Dendritic cell treated with granulocyte-macrophage colony-stimulating factor and Interleukin-4, amounts not matched to agents 40 ng/mL and 50 ng/mL, for 4 days (primary cell): ENCODE measurements at regions of chr6 and their contacts with region 1.

Region 1: GRCh38 chr6:34757687-34758274 is 476 bp downstream of the SNRPC start:
- H3K4me3 Mint-ChIP-seq: no peak overlapping the region
- H3K27ac Mint-ChIP-seq: no peak overlapping the region
- H3K4me1 Mint-ChIP-seq: peaks cover 11% of the 10 kb centered on the region
- H3K27me3 Mint-ChIP-seq: no peaks in the 10 kb centered on the region

Region 2: GRCh38 chr6:34656378-34657036 is 101.3 kb before region 1 on chr6:
- intact Hi-C with region 1: loop called (anchors 5 kb)
- H3K4me3 Mint-ChIP-seq: peak overlapping the region; percentile 68
- H3K27ac Mint-ChIP-seq: peak overlapping the region; percentile 75
- H3K4me1 Mint-ChIP-seq: peaks cover 58% of the 10 kb centered on the region
- H3K27me3 Mint-ChIP-seq: no peaks in the 10 kb centered on the region

Region 3: GRCh38 chr6:34696739-34697543 is 60.8 kb before region 1 on chr6 and contains the start of gene ILRUN:
- intact Hi-C with region 1: loop called (anchors 2 kb)
- H3K4me3 Mint-ChIP-seq: peak within 1 kb of the TSS; percentile 89
- H3K27ac Mint-ChIP-seq: peak within 1 kb of the TSS; percentile 92
- H3K4me1 Mint-ChIP-seq: peaks cover 32% of the 10 kb centered on the region
- H3K27me3 Mint-ChIP-seq: no peaks in the 10 kb centered on the region

Region 4: GRCh38 chr6:34771727-34772126 is 13.9 kb after region 1 on chr6:
- intact Hi-C with region 1: loop called (anchors 2 kb)
- H3K4me3 Mint-ChIP-seq: no peak overlapping the region
- H3K27ac Mint-ChIP-seq: peak overlapping the region; percentile 59
- H3K4me1 Mint-ChIP-seq: peaks cover 34% of the 10 kb centered on the region
- H3K27me3 Mint-ChIP-seq: no peaks in the 10 kb centered on the region

Region 5: DNA sequence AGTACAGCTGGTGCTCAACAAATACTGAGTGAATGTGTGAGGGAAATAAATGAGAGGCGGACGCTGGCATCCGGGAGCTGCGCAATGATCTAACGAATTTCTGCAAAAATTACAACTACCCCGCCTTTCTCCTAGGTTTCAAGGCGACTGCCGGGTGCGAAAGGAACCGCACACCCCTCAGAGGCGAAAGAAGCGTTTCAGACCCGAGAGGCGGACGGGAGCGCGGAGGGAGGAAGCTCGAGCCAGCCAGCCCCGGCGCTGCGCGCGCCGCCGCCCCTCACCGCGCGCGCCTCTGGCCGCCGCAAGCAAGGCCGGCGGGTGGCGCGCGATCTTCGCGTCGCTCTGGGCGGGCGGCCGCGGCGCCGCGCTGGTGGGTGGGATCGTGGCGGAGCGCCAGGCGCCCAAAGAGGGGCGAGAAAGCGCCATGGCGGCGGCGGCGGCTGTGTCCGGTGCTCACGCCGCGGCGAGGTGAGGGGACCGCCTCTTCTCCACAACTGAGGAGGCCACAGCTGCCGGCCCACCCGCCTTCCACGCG is 34.0 kb after region 1 on chr6 and contains the start of gene BLTP3A:
- intact Hi-C with region 1: loop called (anchors 2 kb)
- H3K4me3 Mint-ChIP-seq: peak within 1 kb of the TSS; percentile 91
- H3K27ac Mint-ChIP-seq: peak within 1 kb of the TSS; percentile 98
- H3K4me1 Mint-ChIP-seq: peaks cover 32% of the 10 kb centered on the region
- H3K27me3 Mint-ChIP-seq: no peaks in the 10 kb centered on the region

Region 6: GRCh38 chr6:34887753-34888513 is 130.2 kb after region 1 on chr6 and contains the start of gene TAF11:
- intact Hi-C with region 1: loop called (anchors 5 kb)
- H3K4me3 Mint-ChIP-seq: peak within 1 kb of the TSS; percentile 100
- H3K27ac Mint-ChIP-seq: peak within 1 kb of the TSS; percentile 100
- H3K4me1 Mint-ChIP-seq: peaks cover 59% of the 10 kb centered on the region
- H3K27me3 Mint-ChIP-seq: no peaks in the 10 kb centered on the region